Endothelial cell of umbilical vein (primary cell): ENCODE measurements at regions of chr1 and their contacts with region 1.

Region 1: DNA sequence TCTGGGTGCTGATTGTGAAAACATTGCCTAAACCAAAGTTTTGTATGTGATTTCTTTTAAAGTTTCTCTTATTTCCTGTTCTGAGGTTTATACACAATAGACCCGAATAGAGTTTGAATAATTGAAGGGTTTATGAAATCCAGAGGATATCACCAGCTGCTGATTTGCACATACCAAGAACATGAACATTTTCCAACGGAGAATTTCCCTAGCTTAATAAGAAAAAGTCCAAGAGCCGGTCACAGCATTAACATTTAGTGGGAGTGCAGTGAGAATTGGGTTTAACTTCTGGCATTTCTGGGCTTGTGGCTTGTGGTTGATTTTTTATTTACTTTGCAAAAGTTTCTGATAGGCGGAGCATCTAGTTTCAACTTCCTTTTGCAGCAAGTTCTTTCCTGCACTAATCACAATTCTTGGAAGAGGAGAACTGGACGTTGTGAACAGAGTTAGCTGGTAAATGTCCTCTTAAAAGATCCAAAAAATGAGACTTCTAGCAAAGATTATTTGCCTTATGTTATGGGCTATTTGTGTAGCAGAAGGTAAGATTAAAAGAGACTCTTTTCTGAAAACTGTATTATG is at the start of gene CFH:
- DNase-seq: peak; percentile 81
- H3K4me3 ChIP-seq: peak within 1 kb of the TSS; percentile 19 to 57 (median 27)
- H3K27ac ChIP-seq: no peak within 1 kb of the TSS
- H3K4me1 ChIP-seq: peaks cover 7% of the 10 kb centered on the region
- H3K27me3 ChIP-seq: no peaks in the 10 kb centered on the region
- CTCF ChIP-seq: no peak
- POLR2A ChIP-seq: peak; percentile 53
- total RNA-seq, gene CFH: 19.3 and 25.3 TPM in 2 replicates

Region 2: GRCh38 chr1:196538473-196538872 is 113.3 kb before region 1 on chr1:
- CTCF ChIA-PET with region 1: no interaction called
- POLR2A ChIA-PET with region 1: no interaction called
- dilution Hi-C with region 1: no loop called
- intact Hi-C with region 1: no loop called
- DNase-seq: no peak
- H3K4me3 ChIP-seq: no peak overlapping the region
- H3K27ac ChIP-seq: no peak overlapping the region
- H3K4me1 ChIP-seq: no peaks in the 10 kb centered on the region
- H3K27me3 ChIP-seq: no peaks in the 10 kb centered on the region
- CTCF ChIP-seq: no peak
- POLR2A ChIP-seq: no peak

Region 3: DNA sequence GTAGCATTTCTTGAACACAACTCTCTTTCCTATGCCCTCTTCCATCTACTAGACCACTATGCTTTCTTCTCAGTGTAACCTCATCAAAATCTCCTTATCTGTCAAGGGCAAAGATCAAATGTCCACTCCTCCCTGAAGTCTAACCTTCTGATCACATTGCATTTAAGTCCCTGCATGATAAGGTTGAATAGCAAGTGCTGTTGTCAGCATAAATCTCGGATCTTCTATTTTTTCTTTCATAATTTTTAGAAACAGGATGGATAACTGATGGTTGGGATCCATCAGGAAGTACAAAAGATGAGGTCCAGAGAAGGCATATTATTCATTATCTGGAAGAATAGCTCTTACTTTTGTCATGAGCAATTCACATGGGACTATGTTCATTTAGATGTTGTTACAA is 84.5 kb before region 1 on chr1:
- CTCF ChIA-PET with region 1: no interaction called
- POLR2A ChIA-PET with region 1: no interaction called
- dilution Hi-C with region 1: no loop called
- intact Hi-C with region 1: loop called (anchors 5 kb)
- DNase-seq: no peak
- H3K4me3 ChIP-seq: no peak overlapping the region
- H3K27ac ChIP-seq: no peak overlapping the region
- H3K4me1 ChIP-seq: no peaks in the 10 kb centered on the region
- H3K27me3 ChIP-seq: no peaks in the 10 kb centered on the region
- CTCF ChIP-seq: no peak
- POLR2A ChIP-seq: no peak

Region 4: DNA sequence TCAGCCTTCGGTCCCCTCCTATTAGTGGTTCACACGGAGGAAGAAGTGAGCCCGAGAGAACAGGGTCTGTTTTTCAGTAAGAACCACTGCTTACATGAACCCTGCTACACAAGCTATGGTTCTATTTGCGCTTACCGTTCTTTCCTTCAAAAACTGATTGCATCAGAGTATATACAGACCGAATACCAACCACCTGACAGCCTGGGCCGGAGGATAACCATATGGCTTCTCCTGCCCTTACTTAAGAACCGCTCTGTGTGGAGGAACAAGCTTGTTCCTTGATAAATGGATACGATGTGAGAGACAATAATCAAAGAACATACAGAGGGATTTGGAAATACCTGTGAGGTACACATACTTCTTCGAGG is 42.4 kb before region 1 on chr1:
- CTCF ChIA-PET with region 1: no interaction called
- POLR2A ChIA-PET with region 1: no interaction called
- dilution Hi-C with region 1: no loop called
- intact Hi-C with region 1: no loop called
- DNase-seq: no peak
- H3K4me3 ChIP-seq: peak overlapping the region in 2 of 3 experiments; percentile 69 to 79
- H3K27ac ChIP-seq: no peak overlapping the region
- H3K4me1 ChIP-seq: peaks cover 10% of the 10 kb centered on the region
- H3K27me3 ChIP-seq: no peaks in the 10 kb centered on the region
- CTCF ChIP-seq: no peak
- POLR2A ChIP-seq: no peak